Panc1 (cell line): ENCODE measurements at regions of chr18 and their contacts with region 1.

Region 1: GRCh38 chr18:9380621-9381399 is 46.2 kb downstream of the TWSG1 start:
- DNase-seq: no peak
- ATAC-seq: no peak
- H3K4me3 ChIP-seq: no peak overlapping the region
- H3K27ac ChIP-seq: no peak overlapping the region
- H3K4me1 ChIP-seq: no peaks in the 10 kb centered on the region
- H3K27me3 ChIP-seq: no peaks in the 10 kb centered on the region
- CTCF ChIP-seq: no peak

Region 2: GRCh38 chr18:8176554-8176953 is 1204.3 kb before region 1 on chr18:
- CTCF ChIA-PET with region 1: no interaction called
- POLR2A ChIA-PET with region 1: no interaction called
- in situ Hi-C with region 1: no loop called
- intact Hi-C with region 1: no loop called
- DNase-seq: no peak
- ATAC-seq: no peak
- H3K4me3 ChIP-seq: no peak overlapping the region
- H3K27ac ChIP-seq: no peak overlapping the region
- H3K4me1 ChIP-seq: no peaks in the 10 kb centered on the region
- H3K27me3 ChIP-seq: no peaks in the 10 kb centered on the region
- CTCF ChIP-seq: no peak

Region 3: GRCh38 chr18:9413576-9413975 is 32.8 kb after region 1 on chr18:
- CTCF ChIA-PET with region 1: interaction called, 11 read pairs
- POLR2A ChIA-PET with region 1: no interaction called
- in situ Hi-C with region 1: no loop called
- intact Hi-C with region 1: no loop called
- DNase-seq: no peak
- ATAC-seq: no peak
- H3K4me3 ChIP-seq: no peak overlapping the region
- H3K27ac ChIP-seq: no peak overlapping the region; the same call in 1 of the 2 replicates
- H3K4me1 ChIP-seq: peaks cover 22% of the 10 kb centered on the region
- H3K27me3 ChIP-seq: no peaks in the 10 kb centered on the region
- CTCF ChIP-seq: no peak